Ascending aorta (tissue), 2 donors: ENCODE measurements at regions of chr7 and their contacts with region 1.

Region 1: GRCh38 chr7:35985126-35985754 is 167.8 kb upstream of the EEPD1 start:
- DNase-seq: peak in 1 of 2 donors; percentile 89
- H3K4me3 ChIP-seq: no peak overlapping the region
- H3K27ac ChIP-seq: no peak overlapping the region
- H3K4me1 ChIP-seq: peaks cover 6 to 15% of the 10 kb centered on the region in 2 donors
- H3K27me3 ChIP-seq: no peaks in the 10 kb centered on the region
- CTCF ChIP-seq: peak; percentile 90 to 93 (median 93)

Region 2: DNA sequence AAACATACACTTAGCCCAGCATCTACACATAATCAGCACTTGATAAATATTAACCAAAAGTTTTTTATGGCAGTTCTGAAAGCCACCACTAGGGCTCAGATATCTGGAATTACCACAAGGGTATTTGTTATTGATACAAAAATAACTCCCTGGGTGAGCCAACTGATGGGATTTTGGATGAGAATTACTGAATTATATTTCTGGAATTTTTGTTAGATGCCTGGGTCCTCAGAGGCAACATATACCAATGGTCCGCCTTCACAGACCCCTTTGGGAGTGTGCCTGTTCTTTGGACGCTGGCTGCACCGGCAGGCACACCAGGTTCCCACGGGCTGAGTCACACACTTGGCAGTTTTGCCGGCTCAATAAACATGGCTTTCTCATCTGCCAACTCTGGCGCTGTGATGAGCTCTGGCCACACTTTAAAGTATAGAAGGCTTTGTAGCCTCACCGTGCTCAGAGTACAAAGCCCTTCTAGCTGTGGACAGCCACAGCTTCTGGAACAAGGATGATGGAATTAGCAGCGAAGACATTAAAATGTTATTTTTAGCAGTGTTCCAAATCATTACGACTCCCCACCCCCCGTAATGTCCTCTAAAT is 143.3 kb after region 1 on chr7:
- intact Hi-C with region 1: loop called (anchors 5 kb)
- DNase-seq: peak; percentile 59 to 93
- H3K4me3 ChIP-seq: peak overlapping the region in 1 of 2 donors; percentile 14
- H3K27ac ChIP-seq: peak overlapping the region; percentile 66 to 72
- H3K4me1 ChIP-seq: peaks cover 6 to 15% of the 10 kb centered on the region in 2 donors
- H3K27me3 ChIP-seq: no peaks in the 10 kb centered on the region
- CTCF ChIP-seq: peak; percentile 70 to 79 (median 73)

Region 3: DNA sequence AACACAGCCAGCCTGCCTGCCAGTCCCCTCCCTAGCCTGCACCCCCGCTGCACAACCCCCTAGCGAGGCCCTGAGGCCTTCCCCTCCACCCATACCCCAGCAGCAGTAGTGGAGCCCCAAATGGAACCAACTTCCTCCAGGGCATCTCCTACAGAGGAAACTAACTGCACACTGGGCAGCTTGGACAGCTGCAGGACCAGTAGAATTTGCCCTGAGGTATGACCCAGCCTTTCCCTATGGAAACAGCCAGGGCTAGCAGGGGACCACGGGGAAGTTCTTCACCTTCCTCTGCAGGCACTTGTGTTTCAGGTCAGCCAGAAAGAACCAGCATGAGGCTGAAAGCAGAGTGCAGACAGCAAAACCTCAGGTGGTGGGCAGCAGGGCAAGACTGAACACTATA is 162.1 kb after region 1 on chr7:
- intact Hi-C with region 1: no loop called
- DNase-seq: no peak
- H3K4me3 ChIP-seq: no peak overlapping the region
- H3K27ac ChIP-seq: no peak overlapping the region
- H3K4me1 ChIP-seq: no peaks in the 10 kb centered on the region
- H3K27me3 ChIP-seq: no peaks in the 10 kb centered on the region
- CTCF ChIP-seq: no peak

Region 4: GRCh38 chr7:36207451-36208291 is 222.4 kb after region 1 on chr7:
- intact Hi-C with region 1: loop called (anchors 5 kb)
- DNase-seq: peak; percentile 53 to 79
- H3K4me3 ChIP-seq: no peak overlapping the region
- H3K27ac ChIP-seq: peak overlapping the region; percentile 45 to 73
- H3K4me1 ChIP-seq: peaks cover 4 to 18% of the 10 kb centered on the region in 2 donors
- H3K27me3 ChIP-seq: no peaks in the 10 kb centered on the region
- CTCF ChIP-seq: peak in 1 of 3 experiments; percentile 21

Region 5: DNA sequence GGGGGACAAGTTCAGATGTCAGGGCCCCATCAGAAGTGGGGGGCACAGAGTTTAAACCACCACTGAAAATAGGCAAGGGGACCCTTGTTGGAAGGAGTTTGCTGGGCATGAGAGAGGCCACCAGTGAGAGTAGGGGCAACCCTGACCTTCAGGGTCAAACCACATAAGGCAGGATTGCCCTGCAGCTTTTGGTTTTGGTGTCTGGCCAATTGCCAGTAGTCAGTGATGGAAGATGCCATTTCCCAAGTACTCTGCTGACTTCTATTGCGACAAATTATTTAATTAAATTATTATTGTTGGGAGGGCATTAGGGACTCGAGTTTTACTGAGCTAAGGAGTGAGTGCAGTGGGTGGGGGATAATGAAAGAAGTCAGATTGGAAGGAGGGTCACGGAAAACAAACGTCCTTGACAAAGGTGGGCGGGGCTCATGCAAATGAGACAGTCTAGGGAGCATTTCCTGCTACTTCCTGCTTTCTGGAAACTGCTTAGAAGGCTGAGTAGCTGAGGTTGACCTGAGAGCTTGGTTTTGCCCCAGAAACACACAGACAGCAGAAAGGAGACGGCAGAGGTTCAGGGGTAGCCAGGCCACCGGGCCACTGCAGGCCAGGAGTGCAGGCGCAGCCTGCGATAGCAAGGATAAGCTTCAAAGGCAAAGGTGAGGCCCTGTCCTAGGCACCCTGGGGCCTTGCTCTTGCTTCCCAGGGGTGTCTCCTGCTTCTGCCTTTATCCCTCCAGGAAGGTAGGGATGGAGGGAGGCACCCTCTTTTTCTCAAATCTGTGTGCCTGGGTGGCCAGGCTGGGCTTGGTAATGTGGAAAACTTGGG is 330.3 kb after region 1 on chr7:
- intact Hi-C with region 1: loop called (anchors 1 kb)
- DNase-seq: no peak
- H3K4me3 ChIP-seq: no peak overlapping the region
- H3K27ac ChIP-seq: no peak overlapping the region
- H3K4me1 ChIP-seq: no peaks in the 10 kb centered on the region
- H3K27me3 ChIP-seq: no peaks in the 10 kb centered on the region
- CTCF ChIP-seq: no peak